CD4-positive, alpha-beta T cell (primary cell): ENCODE measurements at regions of chr11 and their contacts with region 1.

Region 1: DNA sequence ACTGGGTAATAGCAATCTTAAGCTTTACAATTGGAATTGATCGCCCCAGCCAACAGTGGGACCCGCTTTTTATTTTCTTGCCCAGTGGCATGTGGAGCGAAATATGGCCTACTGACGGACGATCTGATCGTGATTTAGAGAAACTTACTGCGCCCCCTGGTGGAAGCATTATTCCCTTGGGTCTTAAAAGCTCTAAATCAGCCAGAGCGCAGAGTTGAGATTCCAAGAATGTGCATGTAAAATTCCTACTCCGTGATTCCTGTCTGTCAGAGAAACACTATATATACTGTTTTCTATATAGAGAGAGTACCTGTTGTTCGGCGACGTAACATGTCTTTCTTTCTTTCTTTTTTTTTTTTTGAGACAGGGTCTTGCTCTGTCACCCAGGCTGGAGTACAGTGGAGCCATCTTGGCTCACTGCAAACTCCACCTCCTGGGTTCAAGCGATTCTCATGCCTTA is 3.7 kb upstream of the DPF2 start:
- DNase-seq: peak; percentile 56 to 93 (median 79)
- ATAC-seq: peak; percentile 28
- H3K4me3 ChIP-seq: no peak overlapping the region
- H3K4me3 Mint-ChIP-seq: peak overlapping the region; percentile 79
- H3K27ac ChIP-seq: no peak overlapping the region
- H3K27ac Mint-ChIP-seq: peak overlapping the region; percentile 15
- H3K4me1 ChIP-seq: peaks cover 12% of the 10 kb centered on the region
- H3K4me1 Mint-ChIP-seq: peaks cover 21% of the 10 kb centered on the region
- H3K27me3 ChIP-seq: no peaks in the 10 kb centered on the region
- H3K27me3 Mint-ChIP-seq: no peaks in the 10 kb centered on the region
- CTCF ChIP-seq: peak; percentile 97

Region 2: GRCh38 chr11:65225279-65226102 is 104.5 kb before region 1 on chr11:
- CTCF ChIA-PET with region 1: interaction called, 14 read pairs
- POLR2A ChIA-PET with region 1: interaction called, 3 read pairs
- intact Hi-C with region 1: loop called in 1 of 2 experiments (anchors 5 kb)
- DNase-seq: peak; percentile 42 to 80 (median 58)
- ATAC-seq: peak; percentile 92
- H3K4me3 ChIP-seq: peak overlapping the region; percentile 49
- H3K4me3 Mint-ChIP-seq: peak overlapping the region; percentile 68
- H3K27ac ChIP-seq: no peak overlapping the region
- H3K27ac Mint-ChIP-seq: no peak overlapping the region
- H3K4me1 ChIP-seq: peaks cover 14% of the 10 kb centered on the region
- H3K4me1 Mint-ChIP-seq: peaks cover 12% of the 10 kb centered on the region
- H3K27me3 ChIP-seq: peaks cover 14 to 17% of the 10 kb centered on the region in 2 experiments
- H3K27me3 Mint-ChIP-seq: peaks cover 24% of the 10 kb centered on the region
- CTCF ChIP-seq: no peak

Region 3: DNA sequence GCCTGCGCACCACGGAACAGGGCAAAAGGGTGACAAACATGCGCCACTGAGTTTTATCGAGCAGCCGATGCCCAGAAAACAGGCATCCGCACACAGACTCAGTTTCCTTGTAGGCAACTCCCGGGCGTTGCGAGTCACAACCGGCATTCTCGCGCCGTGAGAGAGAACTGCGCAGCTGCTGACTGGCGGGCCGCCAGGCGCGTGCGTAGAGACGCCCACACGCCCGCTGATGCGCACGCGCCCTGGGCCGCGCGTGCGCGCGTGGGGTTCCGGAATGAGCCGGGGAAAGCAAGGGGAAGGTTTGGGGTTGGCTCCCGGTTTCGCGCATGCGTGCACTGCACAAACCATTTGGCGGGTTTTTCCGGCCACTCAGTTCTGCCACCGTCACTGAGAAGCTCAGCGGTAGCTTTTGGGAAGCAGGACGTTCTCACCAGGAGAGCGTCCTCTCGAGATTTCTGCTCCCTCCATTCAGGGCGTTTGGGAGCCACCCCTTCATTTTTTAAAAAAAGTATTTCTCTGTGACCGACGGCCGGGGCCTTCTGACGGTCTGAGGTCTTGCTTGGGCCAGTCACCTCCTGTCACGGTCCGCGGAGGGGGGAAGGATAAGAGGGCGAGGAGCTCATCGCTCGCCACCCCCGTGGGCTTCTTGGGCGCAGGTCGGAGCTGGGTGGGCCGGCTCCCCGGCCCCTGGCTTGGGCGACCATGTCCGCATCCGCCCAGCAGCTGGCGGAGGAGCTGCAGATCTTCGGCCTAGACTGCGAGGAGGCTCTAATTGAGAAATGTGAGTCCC is 68.2 kb before region 1 on chr11 and contains the start of gene POLA2:
- CTCF ChIA-PET with region 1: interaction called, 6 read pairs
- POLR2A ChIA-PET with region 1: interaction called, 16 read pairs
- intact Hi-C with region 1: loop called (anchors 5 kb)
- DNase-seq: peak; percentile 90 to 99 (median 96)
- ATAC-seq: peak; percentile 88
- H3K4me3 ChIP-seq: peak within 1 kb of the TSS; percentile 84
- H3K4me3 Mint-ChIP-seq: peak within 1 kb of the TSS; percentile 92
- H3K27ac ChIP-seq: peak within 1 kb of the TSS; percentile 84 to 89
- H3K27ac Mint-ChIP-seq: peak within 1 kb of the TSS; percentile 91
- H3K4me1 ChIP-seq: peaks cover 31% of the 10 kb centered on the region
- H3K4me1 Mint-ChIP-seq: peaks cover 54% of the 10 kb centered on the region
- H3K27me3 ChIP-seq: no peaks in the 10 kb centered on the region
- H3K27me3 Mint-ChIP-seq: no peaks in the 10 kb centered on the region
- CTCF ChIP-seq: no peak
- total RNA-seq, gene POLA2: 9.6 to 10.6 TPM

Region 4: GRCh38 chr11:65274735-65275682 is 55.0 kb before region 1 on chr11:
- CTCF ChIA-PET with region 1: interaction called, 10 read pairs
- POLR2A ChIA-PET with region 1: interaction called, 5 read pairs
- intact Hi-C with region 1: no loop called
- DNase-seq: peak in 7 of 14 experiments; percentile 7 to 67 (median 46)
- ATAC-seq: no peak
- H3K4me3 ChIP-seq: no peak overlapping the region
- H3K4me3 Mint-ChIP-seq: no peak overlapping the region
- H3K27ac ChIP-seq: no peak overlapping the region
- H3K27ac Mint-ChIP-seq: no peak overlapping the region
- H3K4me1 ChIP-seq: no peaks in the 10 kb centered on the region
- H3K4me1 Mint-ChIP-seq: peaks cover 8% of the 10 kb centered on the region
- H3K27me3 ChIP-seq: no peaks in the 10 kb centered on the region
- H3K27me3 Mint-ChIP-seq: no peaks in the 10 kb centered on the region
- CTCF ChIP-seq: peak; percentile 57

Region 5: DNA sequence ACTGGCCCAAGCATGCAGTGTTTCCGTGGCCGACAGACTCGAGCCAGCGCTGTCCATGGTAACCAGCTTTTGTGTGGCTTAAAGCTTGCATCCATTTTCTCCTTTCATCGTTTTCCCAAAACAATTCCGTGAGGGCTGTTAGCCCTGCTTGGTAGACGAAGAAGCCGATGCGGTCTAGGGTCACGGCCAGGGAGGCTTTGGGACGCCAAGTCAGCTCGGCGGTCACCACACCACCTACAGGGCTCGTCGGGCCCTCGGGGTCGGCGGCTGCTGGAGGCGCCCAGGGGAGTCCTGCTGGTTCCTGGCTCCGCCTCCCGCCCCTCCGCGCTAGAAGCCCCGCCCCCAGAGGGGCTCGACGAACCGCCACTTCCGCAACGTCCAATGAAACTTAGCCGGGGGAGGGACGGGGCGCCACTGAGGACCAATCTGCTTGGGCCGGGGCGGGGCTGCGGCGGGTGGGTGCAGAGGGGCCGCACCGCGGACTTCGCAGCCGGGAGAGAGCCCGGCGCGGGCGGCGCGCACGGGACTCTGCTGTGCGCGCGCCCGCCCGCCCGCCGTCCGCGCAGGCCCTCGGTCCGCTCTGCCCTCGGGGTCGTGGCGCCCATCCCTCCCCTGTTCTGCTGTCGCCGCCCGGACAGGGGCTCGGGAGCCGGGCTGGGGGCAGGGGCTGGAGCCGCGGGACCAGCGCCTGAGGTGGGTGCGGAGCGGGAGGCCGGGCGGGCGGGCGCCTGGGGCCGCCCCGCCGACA is 24.5 kb after region 1 on chr11 and contains the start of gene TIGD3:
- CTCF ChIA-PET with region 1: interaction called, 10 read pairs
- POLR2A ChIA-PET with region 1: interaction called, 13 read pairs
- intact Hi-C with region 1: no loop called
- DNase-seq: peak; percentile 91 to 99 (median 96)
- ATAC-seq: peak; percentile 96
- H3K4me3 ChIP-seq: peak within 1 kb of the TSS; percentile 61
- H3K4me3 Mint-ChIP-seq: peak within 1 kb of the TSS; percentile 97
- H3K27ac ChIP-seq: peak within 1 kb of the TSS in 1 of 2 donors; percentile 26
- H3K27ac Mint-ChIP-seq: peak within 1 kb of the TSS; percentile 79
- H3K4me1 ChIP-seq: peaks cover 20% of the 10 kb centered on the region
- H3K4me1 Mint-ChIP-seq: peaks cover 18% of the 10 kb centered on the region
- H3K27me3 ChIP-seq: no peaks in the 10 kb centered on the region
- H3K27me3 Mint-ChIP-seq: no peaks in the 10 kb centered on the region
- CTCF ChIP-seq: no peak
- total RNA-seq, gene TIGD3: 0.73 to 0.85 TPM